A673 (cell line): ENCODE measurements at regions of chr14 and their contacts with region 1.

Region 1: GRCh38 chr14:55430024-55430690 is 10.3 kb downstream of the TBPL2 start:
- DNase-seq: peak; percentile 72
- H3K4me3 ChIP-seq: no peak overlapping the region
- H3K27ac ChIP-seq: no peak overlapping the region
- H3K4me1 ChIP-seq: no peaks in the 10 kb centered on the region
- H3K27me3 ChIP-seq: no peaks in the 10 kb centered on the region
- CTCF ChIP-seq: peak; percentile 58

Region 2: GRCh38 chr14:54857830-54858269 is 572.3 kb before region 1 on chr14:
- CTCF ChIA-PET with region 1: no interaction called
- POLR2A ChIA-PET with region 1: no interaction called
- intact Hi-C with region 1: no loop called
- DNase-seq: no peak
- H3K4me3 ChIP-seq: no peak overlapping the region
- H3K27ac ChIP-seq: no peak overlapping the region
- H3K4me1 ChIP-seq: peaks cover 17% of the 10 kb centered on the region
- H3K27me3 ChIP-seq: no peaks in the 10 kb centered on the region
- CTCF ChIP-seq: no peak

Region 3: GRCh38 chr14:55233591-55233990 is 196.6 kb before region 1 on chr14:
- CTCF ChIA-PET with region 1: no interaction called
- POLR2A ChIA-PET with region 1: no interaction called
- intact Hi-C with region 1: no loop called
- DNase-seq: no peak
- H3K4me3 ChIP-seq: no peak overlapping the region
- H3K27ac ChIP-seq: no peak overlapping the region
- H3K4me1 ChIP-seq: no peaks in the 10 kb centered on the region
- H3K27me3 ChIP-seq: no peaks in the 10 kb centered on the region
- CTCF ChIP-seq: no peak

Region 4: DNA sequence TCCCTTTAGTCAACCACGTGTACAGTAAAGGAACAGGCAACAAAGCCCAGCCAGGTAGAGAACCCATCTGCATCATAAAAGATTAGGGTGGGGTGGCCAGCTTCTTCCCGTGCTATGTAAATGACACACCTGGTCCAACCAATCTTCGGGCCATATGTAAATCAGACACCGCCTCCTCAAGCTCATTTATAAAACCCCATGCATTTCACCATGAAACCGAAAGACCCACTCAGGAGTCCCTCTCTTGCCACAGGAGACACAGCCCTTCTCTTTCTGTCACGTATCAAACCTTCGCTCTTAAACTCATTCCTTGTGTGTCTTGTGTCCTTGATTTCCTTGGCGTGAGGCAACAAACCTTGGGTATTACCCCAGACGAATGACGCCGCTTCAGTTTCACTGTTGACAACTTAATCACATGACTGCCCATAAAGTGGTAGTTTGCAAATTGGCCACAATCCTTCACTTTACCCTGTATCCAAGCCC is 70.1 kb after region 1 on chr14:
- CTCF ChIA-PET with region 1: no interaction called
- POLR2A ChIA-PET with region 1: no interaction called
- intact Hi-C with region 1: no loop called
- DNase-seq: no peak
- H3K4me3 ChIP-seq: no peak overlapping the region
- H3K27ac ChIP-seq: no peak overlapping the region
- H3K4me1 ChIP-seq: peaks cover 8% of the 10 kb centered on the region
- H3K27me3 ChIP-seq: no peaks in the 10 kb centered on the region
- CTCF ChIP-seq: no peak

Region 5: DNA sequence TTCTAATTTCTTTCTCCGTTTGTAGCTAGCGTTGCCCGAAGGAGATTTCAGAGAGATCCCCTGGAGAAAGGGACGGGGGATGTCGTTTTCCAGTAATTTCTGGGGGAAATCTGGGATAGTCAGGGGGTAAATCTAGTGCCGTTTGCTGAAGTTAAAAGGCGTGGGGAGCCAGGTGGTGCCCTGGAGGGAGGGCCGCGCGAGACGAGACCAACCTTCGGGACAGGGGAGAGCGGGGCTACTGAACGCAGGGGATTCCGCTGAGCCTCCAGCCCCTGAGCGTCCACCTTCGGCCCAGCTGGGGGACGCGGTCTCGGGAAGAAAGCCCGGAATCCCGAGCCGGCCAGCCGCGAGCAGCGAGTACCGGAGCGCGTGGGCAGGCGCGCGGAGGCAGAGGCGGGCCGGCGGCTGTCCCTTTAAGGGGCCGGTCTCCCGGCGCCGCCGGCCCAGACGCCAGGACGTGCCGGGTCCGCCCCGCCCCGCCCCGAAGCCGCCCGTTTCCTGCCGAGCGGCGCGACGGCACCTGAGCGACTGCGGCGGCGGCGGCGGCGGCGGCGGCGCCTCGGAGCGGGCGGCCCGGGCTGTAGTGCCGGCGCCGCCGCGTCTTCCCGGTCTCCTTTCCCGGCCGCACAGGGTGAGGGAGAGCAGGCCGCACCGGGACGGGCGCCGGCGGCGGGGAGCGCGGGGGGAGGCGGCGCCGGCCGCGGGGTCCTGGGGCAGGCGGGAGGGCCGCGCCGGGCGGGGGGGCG is 149.7 kb after region 1 on chr14 and contains the start of gene KTN1:
- CTCF ChIA-PET with region 1: no interaction called
- POLR2A ChIA-PET with region 1: interaction called, 12 read pairs
- intact Hi-C with region 1: no loop called
- DNase-seq: peak; percentile 89
- H3K4me3 ChIP-seq: peak within 1 kb of the TSS; percentile 92
- H3K27ac ChIP-seq: peak within 1 kb of the TSS; percentile 92
- H3K4me1 ChIP-seq: peaks cover 43% of the 10 kb centered on the region
- H3K27me3 ChIP-seq: no peaks in the 10 kb centered on the region
- CTCF ChIP-seq: no peak
- total RNA-seq, gene KTN1: 170 and 199 TPM in 2 replicates

Region 6: GRCh38 chr14:55588259-55588699 is 158.1 kb after region 1 on chr14:
- CTCF ChIA-PET with region 1: interaction called, 11 read pairs
- POLR2A ChIA-PET with region 1: no interaction called
- intact Hi-C with region 1: no loop called
- DNase-seq: no peak
- H3K4me3 ChIP-seq: no peak overlapping the region
- H3K27ac ChIP-seq: no peak overlapping the region
- H3K4me1 ChIP-seq: peaks cover 70% of the 10 kb centered on the region
- H3K27me3 ChIP-seq: no peaks in the 10 kb centered on the region
- CTCF ChIP-seq: no peak